Naive thymus-derived CD4-positive, alpha-beta T cell (primary cell): ENCODE measurements at regions of chr2 and their contacts with region 1.

Region 1: GRCh38 chr2:12716282-12717190 is at the start of gene TRIB2:
- DNase-seq: peak; percentile 78 to 90 (median 88)
- ATAC-seq: peak; percentile 88
- H3K4me3 ChIP-seq: peak within 1 kb of the TSS; percentile 86
- H3K4me3 Mint-ChIP-seq: peak within 1 kb of the TSS; percentile 88 to 100 (median 99)
- H3K27ac ChIP-seq: peak within 1 kb of the TSS; percentile 88
- H3K27ac Mint-ChIP-seq: peak within 1 kb of the TSS; percentile 93 to 97 (median 96)
- H3K4me1 ChIP-seq: peaks cover 10 to 18% of the 10 kb centered on the region in 2 donors
- H3K4me1 Mint-ChIP-seq: peaks cover 32 to 65% (median 56%) of the 10 kb centered on the region in 7 donors
- H3K27me3 ChIP-seq: no peaks in the 10 kb centered on the region
- H3K27me3 Mint-ChIP-seq: peaks cover 0 to 15% (median 0%) of the 10 kb centered on the region in 5 donors
- total RNA-seq, gene TRIB2: 63.1 to 125 (median 110) TPM

Region 2: GRCh38 chr2:11743846-11744553 is 972.5 kb before region 1 on chr2:
- CTCF ChIA-PET with region 1: no interaction called
- POLR2A ChIA-PET with region 1: no interaction called
- intact Hi-C with region 1: loop called (anchors 1 to 5 kb)
- DNase-seq: peak in 1 of 9 donors; percentile 80
- ATAC-seq: peak; percentile 64
- H3K4me3 ChIP-seq: peak overlapping the region; percentile 35
- H3K4me3 Mint-ChIP-seq: peak overlapping the region in 7 of 10 donors; percentile 38 to 81 (median 65)
- H3K27ac ChIP-seq: no peak overlapping the region
- H3K27ac Mint-ChIP-seq: peak overlapping the region in 4 of 9 donors; percentile 22 to 97 (median 62)
- H3K4me1 ChIP-seq: peaks cover 33 to 41% of the 10 kb centered on the region in 2 donors
- H3K4me1 Mint-ChIP-seq: peaks cover 18 to 50% (median 45%) of the 10 kb centered on the region in 7 donors
- H3K27me3 ChIP-seq: no peaks in the 10 kb centered on the region
- H3K27me3 Mint-ChIP-seq: no peaks in the 10 kb centered on the region

Region 3: GRCh38 chr2:12005886-12006681 is 710.5 kb before region 1 on chr2:
- CTCF ChIA-PET with region 1: no interaction called
- POLR2A ChIA-PET with region 1: interaction called, 3 read pairs
- intact Hi-C with region 1: loop called in 1 of 2 experiments (anchors 10 kb)
- DNase-seq: peak; percentile 25 to 64 (median 45)
- ATAC-seq: peak; percentile 94
- H3K4me3 ChIP-seq: no peak overlapping the region
- H3K4me3 Mint-ChIP-seq: peak overlapping the region in 6 of 10 donors; percentile 15 to 57 (median 42)
- H3K27ac ChIP-seq: no peak overlapping the region
- H3K27ac Mint-ChIP-seq: peak overlapping the region in 4 of 9 donors; percentile 9 to 52 (median 38)
- H3K4me1 ChIP-seq: peaks cover 17 to 20% of the 10 kb centered on the region in 2 donors
- H3K4me1 Mint-ChIP-seq: peaks cover 12 to 42% (median 29%) of the 10 kb centered on the region in 7 donors
- H3K27me3 ChIP-seq: peaks cover 0 to 12% of the 10 kb centered on the region in 2 donors
- H3K27me3 Mint-ChIP-seq: peaks cover 0 to 56% (median 2%) of the 10 kb centered on the region in 5 donors

Region 4: DNA sequence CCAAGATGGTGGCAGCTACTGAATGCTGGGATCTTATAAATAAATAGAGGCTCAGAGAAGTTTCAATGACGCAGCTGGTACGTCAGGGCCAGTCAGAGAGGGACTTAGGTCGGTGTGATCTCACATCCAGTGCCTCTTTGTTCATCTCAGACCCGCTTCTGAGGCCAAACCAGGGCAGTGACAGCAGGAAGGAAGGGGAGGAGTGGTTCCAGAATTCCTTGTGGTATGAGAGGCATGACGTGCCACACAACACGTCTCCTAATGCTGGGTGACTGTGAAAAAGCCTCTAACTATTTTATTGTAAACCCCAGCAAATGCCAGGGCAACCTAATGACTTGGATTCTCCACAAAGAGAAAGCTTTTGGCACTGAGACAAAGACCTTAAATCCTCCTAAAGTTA is 546.8 kb before region 1 on chr2:
- CTCF ChIA-PET with region 1: interaction called, 3 read pairs
- POLR2A ChIA-PET with region 1: interaction called, 3 read pairs
- intact Hi-C with region 1: loop called in 1 of 2 experiments (anchors 2 kb)
- DNase-seq: peak in 6 of 9 donors; percentile 33 to 63 (median 47)
- ATAC-seq: peak; percentile 79
- H3K4me3 ChIP-seq: no peak overlapping the region
- H3K4me3 Mint-ChIP-seq: peak overlapping the region in 7 of 10 donors; percentile 33 to 74 (median 60)
- H3K27ac ChIP-seq: no peak overlapping the region
- H3K27ac Mint-ChIP-seq: peak overlapping the region in 7 of 9 donors; percentile 9 to 86 (median 73)
- H3K4me1 ChIP-seq: peaks cover 0 to 25% of the 10 kb centered on the region in 2 donors
- H3K4me1 Mint-ChIP-seq: peaks cover 28 to 55% (median 44%) of the 10 kb centered on the region in 7 donors
- H3K27me3 ChIP-seq: no peaks in the 10 kb centered on the region
- H3K27me3 Mint-ChIP-seq: peaks cover 0 to 3% (median 0%) of the 10 kb centered on the region in 5 donors

Region 5: GRCh38 chr2:12416600-12416999 is 299.9 kb before region 1 on chr2:
- CTCF ChIA-PET with region 1: interaction called, 45 read pairs
- POLR2A ChIA-PET with region 1: interaction called, 23 read pairs
- intact Hi-C with region 1: loop called (anchors 1 kb)
- DNase-seq: peak in 8 of 9 donors; percentile 26 to 72 (median 64)
- ATAC-seq: peak; percentile 83
- H3K4me3 ChIP-seq: no peak overlapping the region
- H3K4me3 Mint-ChIP-seq: peak overlapping the region in 9 of 10 donors; percentile 18 to 75 (median 30)
- H3K27ac ChIP-seq: no peak overlapping the region
- H3K27ac Mint-ChIP-seq: peak overlapping the region; percentile 24 to 77 (median 52)
- H3K4me1 ChIP-seq: peaks cover 16 to 23% of the 10 kb centered on the region in 2 donors
- H3K4me1 Mint-ChIP-seq: peaks cover 27 to 82% (median 66%) of the 10 kb centered on the region in 7 donors
- H3K27me3 ChIP-seq: no peaks in the 10 kb centered on the region
- H3K27me3 Mint-ChIP-seq: no peaks in the 10 kb centered on the region

Region 6: GRCh38 chr2:12728221-12728777 is 11.8 kb after region 1 on chr2:
- CTCF ChIA-PET with region 1: interaction called, 23 read pairs
- POLR2A ChIA-PET with region 1: interaction called, 39 read pairs
- intact Hi-C with region 1: loop called (anchors 1 kb)
- DNase-seq: peak in 8 of 9 donors; percentile 32 to 88 (median 82)
- ATAC-seq: peak; percentile 86
- H3K4me3 ChIP-seq: peak overlapping the region; percentile 5
- H3K4me3 Mint-ChIP-seq: peak overlapping the region; percentile 63 to 92 (median 77)
- H3K27ac ChIP-seq: peak overlapping the region; percentile 40
- H3K27ac Mint-ChIP-seq: peak overlapping the region; percentile 74 to 96 (median 89)
- H3K4me1 ChIP-seq: peaks cover 38 to 68% of the 10 kb centered on the region in 2 donors
- H3K4me1 Mint-ChIP-seq: peaks cover 73 to 99% (median 94%) of the 10 kb centered on the region in 7 donors
- H3K27me3 ChIP-seq: no peaks in the 10 kb centered on the region
- H3K27me3 Mint-ChIP-seq: no peaks in the 10 kb centered on the region

Region 7: DNA sequence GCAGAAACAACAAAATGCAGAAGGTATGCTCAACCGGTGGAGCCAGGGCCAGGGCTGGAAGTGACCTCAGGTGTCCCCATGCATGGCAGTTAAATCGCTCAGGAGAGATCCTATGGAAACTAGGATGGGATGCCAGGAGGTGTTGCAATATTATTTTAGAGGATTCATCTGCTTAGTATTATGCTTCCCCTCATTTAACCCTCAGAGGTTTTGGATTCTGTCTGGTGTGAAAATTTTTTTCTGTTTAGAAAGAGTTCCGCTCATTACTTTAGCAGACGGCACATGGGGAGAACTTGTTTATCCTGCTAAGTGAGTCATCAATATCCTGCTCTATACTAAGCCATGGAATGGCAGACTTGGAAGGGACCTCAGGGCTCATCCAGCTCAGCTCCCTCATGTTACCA is 42.7 kb after region 1 on chr2:
- CTCF ChIA-PET with region 1: no interaction called
- POLR2A ChIA-PET with region 1: no interaction called
- intact Hi-C with region 1: no loop called
- DNase-seq: no peak
- ATAC-seq: no peak
- H3K4me3 ChIP-seq: no peak overlapping the region
- H3K4me3 Mint-ChIP-seq: no peak overlapping the region
- H3K27ac ChIP-seq: no peak overlapping the region
- H3K27ac Mint-ChIP-seq: no peak overlapping the region
- H3K4me1 ChIP-seq: peaks cover 0 to 6% of the 10 kb centered on the region in 2 donors
- H3K4me1 Mint-ChIP-seq: peaks cover 2 to 13% (median 11%) of the 10 kb centered on the region in 7 donors
- H3K27me3 ChIP-seq: no peaks in the 10 kb centered on the region
- H3K27me3 Mint-ChIP-seq: peaks cover 0 to 35% (median 0%) of the 10 kb centered on the region in 5 donors